ENCODE measurements at regions of chr10 and their contacts with region 1.

Region 1: DNA sequence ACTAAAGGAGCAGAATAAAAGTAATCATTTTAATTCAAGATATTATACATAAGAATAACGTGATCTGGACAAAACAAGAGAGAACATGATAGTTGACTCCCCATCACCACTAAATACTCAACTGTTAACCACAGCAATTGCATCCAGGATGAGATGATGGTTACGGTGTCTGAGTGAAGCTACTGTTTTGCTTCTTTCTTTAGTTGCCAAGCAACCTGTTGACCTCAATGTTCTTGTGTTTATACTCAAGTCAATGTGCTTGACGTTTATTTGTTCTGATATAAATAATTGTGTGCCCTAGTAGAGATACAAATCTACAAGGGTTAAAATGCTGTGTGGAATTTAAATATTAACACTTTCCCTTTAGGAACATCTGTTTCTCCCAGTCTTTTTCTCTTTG is 31.4 kb upstream of the MPP7 start:
- DNase-seq: peak; percentile 87 to 95 (median 93)
- H3K4me3 ChIP-seq: peak overlapping the region; percentile 36 to 94
- H3K4me3 Mint-ChIP-seq: peak overlapping the region; percentile 91 to 98 (median 96)
- H3K27ac ChIP-seq: peak overlapping the region; percentile 97
- H3K27ac Mint-ChIP-seq: peak overlapping the region; percentile 99 to 100 (median 100)
- H3K4me1 ChIP-seq: peaks cover 62% of the 10 kb centered on the region
- H3K4me1 Mint-ChIP-seq: peaks cover 32 to 70% (median 49%) of the 10 kb centered on the region in 4 donors
- H3K27me3 ChIP-seq: no peaks in the 10 kb centered on the region
- H3K27me3 Mint-ChIP-seq: no peaks in the 10 kb centered on the region

Region 2: DNA sequence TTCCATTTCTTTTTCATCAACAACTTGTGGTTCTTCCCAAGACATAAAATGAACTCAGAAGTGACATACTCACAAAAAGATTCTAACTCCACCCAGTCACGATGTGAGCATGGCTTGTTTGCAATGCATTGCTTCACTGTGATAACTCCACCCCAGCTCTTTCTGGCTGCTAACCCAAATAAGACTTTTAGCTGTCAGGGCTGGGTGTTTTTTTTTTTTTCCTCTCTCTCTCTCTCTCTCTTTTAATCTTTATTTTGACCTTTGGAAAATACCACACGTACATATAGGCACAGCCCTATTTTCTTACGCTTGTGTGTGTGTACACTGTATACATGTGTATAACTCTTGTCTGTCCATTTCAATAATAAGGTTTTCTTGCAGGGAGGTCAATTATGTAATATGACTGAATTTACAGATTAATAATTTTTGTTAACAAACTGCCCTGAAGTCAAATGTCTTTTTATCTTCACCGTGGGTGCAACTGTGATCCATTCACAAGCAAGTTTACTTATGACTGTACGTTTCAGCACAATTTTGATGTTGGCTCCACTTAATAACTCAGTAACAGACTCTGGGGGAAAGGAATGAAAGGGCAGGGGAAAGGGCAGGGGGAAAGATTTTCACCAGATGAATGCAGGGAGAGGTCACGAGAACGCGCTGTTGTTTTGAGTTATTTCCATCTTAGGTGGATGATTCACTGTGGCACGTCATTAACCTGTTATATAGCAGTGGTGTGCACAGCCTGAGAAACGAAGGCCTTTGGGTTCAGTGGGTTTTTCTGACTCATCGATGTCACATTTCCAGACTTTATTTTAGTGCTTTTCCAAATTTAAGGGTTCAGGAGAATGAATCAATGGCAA is 1847.1 kb before region 1 on chr10:
- CTCF ChIA-PET with region 1: no interaction called
- POLR2A ChIA-PET with region 1: no interaction called
- intact Hi-C with region 1: loop called (anchors 10 kb)
- DNase-seq: peak; percentile 58 to 91 (median 70)
- H3K4me3 ChIP-seq: peak overlapping the region in 1 of 2 donors; percentile 49
- H3K4me3 Mint-ChIP-seq: peak overlapping the region; percentile 55 to 77 (median 68)
- H3K27ac ChIP-seq: peak overlapping the region; percentile 73
- H3K27ac Mint-ChIP-seq: peak overlapping the region; percentile 94 to 97 (median 95)
- H3K4me1 ChIP-seq: peaks cover 76% of the 10 kb centered on the region
- H3K4me1 Mint-ChIP-seq: peaks cover 53 to 67% (median 58%) of the 10 kb centered on the region in 4 donors
- H3K27me3 ChIP-seq: no peaks in the 10 kb centered on the region
- H3K27me3 Mint-ChIP-seq: no peaks in the 10 kb centered on the region

Region 3: DNA sequence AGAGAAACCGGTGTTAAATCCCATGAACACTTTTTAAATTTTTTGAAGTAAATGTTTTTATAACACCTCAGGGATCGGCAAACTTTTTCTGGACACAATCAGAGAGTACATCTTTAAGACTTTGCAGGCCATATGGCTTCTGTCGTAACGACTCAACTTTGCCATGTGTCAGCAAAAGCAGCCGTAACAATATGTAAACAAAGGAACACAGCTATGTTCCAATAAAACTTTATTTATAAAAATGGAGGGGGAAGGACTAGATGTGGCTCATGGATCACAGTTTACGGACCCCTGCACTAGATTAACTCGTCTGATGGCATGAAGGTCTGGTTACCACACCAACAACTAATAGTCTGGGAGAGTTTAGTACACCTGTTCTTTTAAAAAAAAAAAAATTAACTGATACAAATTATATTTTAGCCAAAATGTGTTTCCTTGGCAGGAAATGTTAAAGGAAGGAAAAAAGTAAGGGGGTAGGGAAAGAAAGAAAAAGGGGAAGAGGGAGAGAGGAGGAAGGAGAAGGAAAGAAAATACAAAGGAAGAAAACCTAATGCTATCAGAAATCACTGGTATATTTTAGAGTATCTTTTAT is 1523.8 kb before region 1 on chr10:
- CTCF ChIA-PET with region 1: no interaction called
- POLR2A ChIA-PET with region 1: no interaction called
- intact Hi-C with region 1: no loop called
- DNase-seq: no peak
- H3K4me3 ChIP-seq: no peak overlapping the region
- H3K4me3 Mint-ChIP-seq: no peak overlapping the region
- H3K27ac ChIP-seq: no peak overlapping the region
- H3K27ac Mint-ChIP-seq: no peak overlapping the region
- H3K4me1 ChIP-seq: peaks cover 63% of the 10 kb centered on the region
- H3K4me1 Mint-ChIP-seq: peaks cover 42 to 76% (median 61%) of the 10 kb centered on the region in 4 donors
- H3K27me3 ChIP-seq: no peaks in the 10 kb centered on the region
- H3K27me3 Mint-ChIP-seq: no peaks in the 10 kb centered on the region

Region 4: GRCh38 chr10:27241652-27242472 is 1092.4 kb before region 1 on chr10:
- CTCF ChIA-PET with region 1: no interaction called
- POLR2A ChIA-PET with region 1: interaction called, 3 read pairs
- intact Hi-C with region 1: loop called (anchors 2 kb)
- DNase-seq: peak; percentile 85 to 88 (median 87)
- H3K4me3 ChIP-seq: peak overlapping the region; percentile 66 to 94
- H3K4me3 Mint-ChIP-seq: peak overlapping the region; percentile 95 to 99 (median 99)
- H3K27ac ChIP-seq: peak overlapping the region; percentile 89
- H3K27ac Mint-ChIP-seq: peak overlapping the region; percentile 98 to 100 (median 99)
- H3K4me1 ChIP-seq: peaks cover 36% of the 10 kb centered on the region
- H3K4me1 Mint-ChIP-seq: peaks cover 20 to 54% (median 31%) of the 10 kb centered on the region in 4 donors
- H3K27me3 ChIP-seq: no peaks in the 10 kb centered on the region
- H3K27me3 Mint-ChIP-seq: peaks cover 0 to 3% of the 10 kb centered on the region in 2 donors

Region 5: DNA sequence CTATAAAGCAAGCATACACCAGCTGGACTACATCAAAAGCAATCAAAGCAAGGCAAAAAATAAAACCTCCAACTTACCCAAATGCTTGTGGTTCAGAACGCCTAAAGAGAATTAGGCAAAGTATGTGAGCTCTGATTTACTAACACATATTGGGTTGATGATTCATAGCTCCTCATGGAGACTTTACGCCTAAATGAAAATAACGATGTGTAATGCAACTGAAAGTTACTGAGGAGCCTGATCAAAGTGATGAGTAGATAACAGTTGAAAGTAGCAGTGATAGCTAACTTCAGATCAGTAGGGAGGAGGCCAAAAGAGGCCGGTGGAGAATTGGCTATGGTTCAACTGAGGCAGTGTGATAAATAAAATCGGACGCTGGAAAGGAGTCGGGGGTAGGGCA is 116.4 kb before region 1 on chr10:
- CTCF ChIA-PET with region 1: no interaction called
- POLR2A ChIA-PET with region 1: no interaction called
- intact Hi-C with region 1: no loop called
- DNase-seq: peak in 1 of 5 donors; percentile 0
- H3K4me3 ChIP-seq: no peak overlapping the region
- H3K4me3 Mint-ChIP-seq: peak overlapping the region in 5 of 8 donors; percentile 1 to 24 (median 16)
- H3K27ac ChIP-seq: no peak overlapping the region
- H3K27ac Mint-ChIP-seq: peak overlapping the region in 2 of 7 donors; percentile 2 to 68
- H3K4me1 ChIP-seq: peaks cover 12% of the 10 kb centered on the region
- H3K4me1 Mint-ChIP-seq: peaks cover 13 to 43% (median 32%) of the 10 kb centered on the region in 4 donors
- H3K27me3 ChIP-seq: no peaks in the 10 kb centered on the region
- H3K27me3 Mint-ChIP-seq: no peaks in the 10 kb centered on the region

Region 6: DNA sequence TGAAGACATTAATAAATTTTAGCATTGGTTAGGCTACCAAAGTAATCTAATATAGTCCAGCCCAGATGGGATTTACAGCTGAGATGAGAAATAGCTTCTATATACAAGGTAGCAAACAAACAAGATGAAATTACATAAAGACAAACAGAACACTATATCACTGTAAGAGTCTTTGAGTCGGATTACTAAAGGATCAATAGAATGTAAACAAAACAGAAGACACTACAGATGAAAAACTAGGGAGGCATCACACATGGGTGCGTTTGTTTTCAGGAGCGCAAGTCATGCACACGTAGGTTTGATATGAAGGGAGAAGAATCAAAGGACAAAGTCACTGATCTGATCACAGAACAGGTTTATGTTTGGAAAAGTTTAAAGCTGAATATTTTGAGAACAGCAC is 57.9 kb before region 1 on chr10:
- CTCF ChIA-PET with region 1: no interaction called
- POLR2A ChIA-PET with region 1: no interaction called
- intact Hi-C with region 1: no loop called
- DNase-seq: no peak
- H3K4me3 ChIP-seq: no peak overlapping the region
- H3K4me3 Mint-ChIP-seq: no peak overlapping the region
- H3K27ac ChIP-seq: no peak overlapping the region
- H3K27ac Mint-ChIP-seq: no peak overlapping the region
- H3K4me1 ChIP-seq: no peaks in the 10 kb centered on the region
- H3K4me1 Mint-ChIP-seq: peaks cover 22 to 48% (median 30%) of the 10 kb centered on the region in 4 donors
- H3K27me3 ChIP-seq: no peaks in the 10 kb centered on the region
- H3K27me3 Mint-ChIP-seq: no peaks in the 10 kb centered on the region

Region 7: DNA sequence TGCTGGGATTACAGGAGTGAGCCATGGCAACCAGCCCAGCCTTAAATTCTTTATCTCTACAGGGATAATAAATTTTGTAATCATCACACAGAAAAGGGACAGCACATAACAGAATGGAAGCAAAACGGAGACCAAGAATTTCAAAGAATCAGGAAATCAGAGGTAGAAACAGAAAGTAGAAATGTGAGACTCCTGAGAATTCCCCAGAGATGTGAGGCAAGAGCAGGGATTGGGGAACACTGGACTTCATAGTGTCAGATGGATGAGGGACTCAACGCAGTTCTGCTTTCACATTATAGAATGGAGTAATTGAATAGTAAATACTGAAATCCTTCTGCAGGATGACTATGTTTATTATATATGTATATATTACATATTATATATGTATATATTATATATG is 21.1 kb after region 1 on chr10:
- CTCF ChIA-PET with region 1: interaction called, 3 read pairs
- POLR2A ChIA-PET with region 1: interaction called, 22 read pairs
- intact Hi-C with region 1: no loop called
- DNase-seq: no peak
- H3K4me3 ChIP-seq: no peak overlapping the region
- H3K4me3 Mint-ChIP-seq: no peak overlapping the region
- H3K27ac ChIP-seq: no peak overlapping the region
- H3K27ac Mint-ChIP-seq: peak overlapping the region in 1 of 7 donors; percentile 38
- H3K4me1 ChIP-seq: no peaks in the 10 kb centered on the region
- H3K4me1 Mint-ChIP-seq: peaks cover 0 to 6% (median 2%) of the 10 kb centered on the region in 4 donors
- H3K27me3 ChIP-seq: no peaks in the 10 kb centered on the region
- H3K27me3 Mint-ChIP-seq: no peaks in the 10 kb centered on the region

Region 8: GRCh38 chr10:28381903-28382347 is 47.6 kb after region 1 on chr10:
- CTCF ChIA-PET with region 1: interaction called, 151 read pairs
- POLR2A ChIA-PET with region 1: interaction called, 130 read pairs
- intact Hi-C with region 1: loop called (anchors 1 kb)
- DNase-seq: peak; percentile 78 to 85 (median 82)
- H3K4me3 ChIP-seq: no peak overlapping the region
- H3K4me3 Mint-ChIP-seq: peak overlapping the region in 3 of 8 donors; percentile 42 to 63 (median 45)
- H3K27ac ChIP-seq: no peak overlapping the region
- H3K27ac Mint-ChIP-seq: peak overlapping the region in 5 of 7 donors; percentile 0 to 94 (median 68)
- H3K4me1 ChIP-seq: peaks cover 17% of the 10 kb centered on the region
- H3K4me1 Mint-ChIP-seq: peaks cover 18 to 25% (median 21%) of the 10 kb centered on the region in 4 donors
- H3K27me3 ChIP-seq: no peaks in the 10 kb centered on the region
- H3K27me3 Mint-ChIP-seq: peaks cover 4 to 5% of the 10 kb centered on the region in 2 donors